Pancreas (tissue), 10 donors: ENCODE measurements at regions of chr7 and their contacts with region 1.

Region 1: DNA sequence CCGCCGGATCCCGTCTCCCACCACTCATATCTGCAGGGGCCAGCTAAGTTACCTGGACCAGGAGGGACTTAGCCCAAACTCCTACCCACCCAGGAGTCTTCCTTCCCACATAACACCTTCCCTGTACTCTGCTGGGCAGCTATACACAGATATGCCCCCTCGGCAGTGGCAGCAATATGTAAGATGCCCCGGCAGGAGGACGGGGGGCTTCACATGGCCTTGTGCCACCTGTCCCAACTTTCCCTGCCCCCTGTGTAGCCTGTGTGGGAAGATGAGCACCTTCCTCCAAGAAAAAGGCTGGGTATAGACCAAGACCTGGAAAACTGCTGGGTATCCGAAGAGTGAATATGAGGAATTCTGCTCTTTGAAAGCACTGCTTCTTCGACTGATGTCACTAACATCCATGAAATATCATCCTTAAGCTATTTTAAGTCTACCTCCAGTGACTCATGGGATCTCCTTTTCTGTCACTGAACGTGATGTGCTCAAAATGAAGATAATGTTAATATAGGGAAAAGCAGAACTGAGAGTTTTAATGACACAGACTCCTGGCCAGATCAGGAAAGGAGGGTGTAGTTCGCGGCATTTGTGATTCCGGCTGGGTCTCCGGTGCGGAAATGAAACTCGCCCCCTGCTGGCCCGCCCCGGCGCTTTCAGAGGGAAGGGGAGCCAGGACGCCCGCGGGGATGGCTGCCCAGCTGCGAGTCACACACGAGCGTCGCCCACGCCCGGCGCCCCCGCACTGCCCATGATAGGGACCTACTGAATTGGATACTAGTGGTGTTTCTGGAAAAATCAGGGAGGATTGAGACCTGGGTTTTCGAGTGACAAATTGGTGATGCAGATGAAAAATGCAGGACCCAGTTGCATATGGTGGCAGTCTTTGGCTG is 256.9 kb upstream of the NFE2L3 start:
- DNase-seq: peak; percentile 70 to 89 (median 78)
- ATAC-seq: peak; percentile 74 to 83 (median 79)
- H3K4me3 ChIP-seq: peak overlapping the region in 3 of 4 donors; percentile 2 to 26 (median 25)
- H3K27ac ChIP-seq: peak overlapping the region in 2 of 4 donors; percentile 53 to 61
- H3K4me1 ChIP-seq: peaks cover 4 to 37% (median 5%) of the 10 kb centered on the region in 3 donors
- H3K27me3 ChIP-seq: no peaks in the 10 kb centered on the region
- CTCF ChIP-seq: peak; percentile 64 to 77 (median 74)

Region 2: DNA sequence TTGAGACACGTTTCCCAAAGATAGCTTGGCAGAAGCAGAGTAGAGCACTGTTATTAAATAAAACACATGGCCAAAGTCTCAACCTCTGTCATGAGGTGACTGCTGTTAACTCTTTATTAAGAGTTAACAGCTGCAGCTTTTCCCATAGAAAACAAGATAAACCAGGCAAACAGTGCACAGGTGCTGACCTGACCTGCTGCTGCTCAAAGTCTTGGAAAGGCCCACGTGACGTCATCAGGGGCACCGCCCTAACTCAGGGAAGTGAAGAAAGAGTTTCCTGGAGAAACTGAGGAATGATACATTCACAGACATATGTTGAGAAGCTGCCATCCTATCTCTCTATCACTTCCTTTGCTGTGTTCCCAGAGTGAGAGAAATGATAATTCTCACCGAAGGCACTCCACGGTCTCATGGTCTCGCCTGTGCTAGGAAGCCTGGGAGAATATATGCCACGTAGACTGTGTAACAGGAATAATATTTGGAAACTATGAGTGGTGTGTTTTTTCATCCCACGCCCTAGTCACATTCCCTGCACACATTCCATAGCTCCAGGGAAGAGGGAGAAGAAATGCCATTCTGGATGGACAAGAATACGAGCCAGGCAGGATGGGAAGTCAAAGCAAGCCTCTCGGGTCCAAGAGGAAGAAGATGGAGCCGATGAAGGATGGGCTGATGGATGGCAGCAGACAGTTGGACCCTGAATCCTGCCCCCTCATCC is 110.7 kb after region 1 on chr7:
- intact Hi-C with region 1: loop called in 1 of 3 experiments (anchors 10 kb)
- DNase-seq: peak; percentile 75 to 92 (median 88)
- ATAC-seq: peak; percentile 33 to 67 (median 64)
- H3K4me3 ChIP-seq: peak overlapping the region in 1 of 4 donors; percentile 14
- H3K27ac ChIP-seq: peak overlapping the region; percentile 61 to 90 (median 72)
- H3K4me1 ChIP-seq: peaks cover 12 to 63% (median 55%) of the 10 kb centered on the region in 3 donors
- H3K27me3 ChIP-seq: no peaks in the 10 kb centered on the region
- CTCF ChIP-seq: no peak

Region 3: GRCh38 chr7:26061688-26062150 is 166.6 kb after region 1 on chr7:
- intact Hi-C with region 1: loop called in 2 of 3 experiments (anchors 2 to 5 kb)
- DNase-seq: peak in 5 of 6 donors; percentile 76 to 87 (median 84)
- ATAC-seq: peak; percentile 90 to 98 (median 97)
- H3K4me3 ChIP-seq: no peak overlapping the region
- H3K27ac ChIP-seq: peak overlapping the region in 2 of 4 donors; percentile 34 to 59
- H3K4me1 ChIP-seq: peaks cover 7 to 15% (median 14%) of the 10 kb centered on the region in 3 donors
- H3K27me3 ChIP-seq: no peaks in the 10 kb centered on the region
- CTCF ChIP-seq: peak; percentile 69 to 89 (median 78)

Region 4: DNA sequence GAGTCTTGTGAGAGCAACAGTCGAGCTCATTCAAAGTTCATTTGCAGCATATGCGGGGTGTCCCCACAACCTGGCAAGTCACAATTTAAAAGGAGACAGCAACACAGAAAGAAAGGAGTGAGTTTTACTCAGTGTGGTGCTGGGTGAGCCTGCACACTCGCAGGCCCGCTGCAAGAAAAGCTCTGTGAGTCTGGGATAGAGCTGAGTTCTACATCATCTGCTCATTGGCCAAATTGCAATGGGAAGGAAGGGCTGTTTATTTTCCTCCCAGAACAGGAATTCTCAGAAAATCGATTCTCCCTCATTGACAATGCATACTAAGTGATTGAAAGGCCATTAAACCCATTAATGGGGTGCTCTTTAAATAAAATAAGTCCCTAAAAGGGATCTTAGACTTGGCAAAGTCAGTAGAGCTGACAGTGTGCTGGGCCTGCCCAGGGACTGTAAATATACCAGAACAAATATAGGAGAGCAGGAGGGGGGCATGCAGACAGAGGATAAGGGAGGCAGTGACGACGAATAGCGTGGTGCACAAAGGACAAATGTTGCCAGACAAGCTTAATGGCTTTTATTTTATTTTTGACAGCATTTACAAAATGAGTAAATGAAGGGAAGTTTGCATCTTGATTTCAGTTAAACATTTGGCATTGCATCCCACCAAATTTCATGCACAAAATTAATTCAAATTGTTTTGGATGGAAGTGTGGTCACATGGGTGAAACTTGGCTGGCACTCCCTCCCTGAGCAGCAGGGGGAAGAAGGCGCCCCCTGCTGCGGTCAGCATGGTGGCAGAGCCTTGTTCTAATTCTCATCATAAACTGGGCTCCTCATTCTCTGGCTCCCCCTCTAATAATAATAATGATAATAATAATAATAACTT is 612.2 kb after region 1 on chr7:
- intact Hi-C with region 1: no loop called
- DNase-seq: no peak
- ATAC-seq: peak; percentile 28 to 83 (median 58)
- H3K4me3 ChIP-seq: no peak overlapping the region
- H3K27ac ChIP-seq: no peak overlapping the region
- H3K4me1 ChIP-seq: peaks cover 0 to 7% (median 4%) of the 10 kb centered on the region in 3 donors
- H3K27me3 ChIP-seq: no peaks in the 10 kb centered on the region
- CTCF ChIP-seq: no peak